ENCODE measurements at regions of chr22 and their contacts with region 1.

Region 1: GRCh38 chr22:46044621-46045438 is 67.9 kb upstream of the WNT7B start:
- DNase-seq: peak; percentile 41
- ATAC-seq: peak; percentile 65
- H3K4me3 Mint-ChIP-seq: peak overlapping the region; percentile 71
- H3K27ac Mint-ChIP-seq: peak overlapping the region; percentile 73
- H3K4me1 Mint-ChIP-seq: peaks cover 8% of the 10 kb centered on the region
- H3K27me3 Mint-ChIP-seq: no peaks in the 10 kb centered on the region
- CTCF ChIP-seq: no peak

Region 2: GRCh38 chr22:45968751-45969413 is 75.9 kb before region 1 on chr22:
- CTCF ChIA-PET with region 1: no interaction called
- POLR2A ChIA-PET with region 1: no interaction called
- intact Hi-C with region 1: no loop called
- DNase-seq: peak; percentile 27
- ATAC-seq: no peak
- H3K4me3 Mint-ChIP-seq: no peak overlapping the region
- H3K27ac Mint-ChIP-seq: no peak overlapping the region
- H3K4me1 Mint-ChIP-seq: no peaks in the 10 kb centered on the region
- H3K27me3 Mint-ChIP-seq: peaks cover 39% of the 10 kb centered on the region
- CTCF ChIP-seq: no peak

Region 3: GRCh38 chr22:46057762-46058420 is 13.1 kb after region 1 on chr22:
- CTCF ChIA-PET with region 1: interaction called, 3 read pairs
- POLR2A ChIA-PET with region 1: interaction called, 12 read pairs
- intact Hi-C with region 1: no loop called
- DNase-seq: peak; percentile 50
- ATAC-seq: peak; percentile 75
- H3K4me3 Mint-ChIP-seq: peak overlapping the region; percentile 32
- H3K27ac Mint-ChIP-seq: peak overlapping the region; percentile 81
- H3K4me1 Mint-ChIP-seq: peaks cover 38% of the 10 kb centered on the region
- H3K27me3 Mint-ChIP-seq: peaks cover 4% of the 10 kb centered on the region
- CTCF ChIP-seq: no peak

Region 4: GRCh38 chr22:46087336-46088277 is 42.8 kb after region 1 on chr22:
- CTCF ChIA-PET with region 1: no interaction called
- POLR2A ChIA-PET with region 1: no interaction called
- intact Hi-C with region 1: no loop called
- DNase-seq: no peak
- ATAC-seq: no peak
- H3K4me3 Mint-ChIP-seq: no peak overlapping the region
- H3K27ac Mint-ChIP-seq: no peak overlapping the region
- H3K4me1 Mint-ChIP-seq: no peaks in the 10 kb centered on the region
- H3K27me3 Mint-ChIP-seq: no peaks in the 10 kb centered on the region
- CTCF ChIP-seq: no peak

Region 5: DNA sequence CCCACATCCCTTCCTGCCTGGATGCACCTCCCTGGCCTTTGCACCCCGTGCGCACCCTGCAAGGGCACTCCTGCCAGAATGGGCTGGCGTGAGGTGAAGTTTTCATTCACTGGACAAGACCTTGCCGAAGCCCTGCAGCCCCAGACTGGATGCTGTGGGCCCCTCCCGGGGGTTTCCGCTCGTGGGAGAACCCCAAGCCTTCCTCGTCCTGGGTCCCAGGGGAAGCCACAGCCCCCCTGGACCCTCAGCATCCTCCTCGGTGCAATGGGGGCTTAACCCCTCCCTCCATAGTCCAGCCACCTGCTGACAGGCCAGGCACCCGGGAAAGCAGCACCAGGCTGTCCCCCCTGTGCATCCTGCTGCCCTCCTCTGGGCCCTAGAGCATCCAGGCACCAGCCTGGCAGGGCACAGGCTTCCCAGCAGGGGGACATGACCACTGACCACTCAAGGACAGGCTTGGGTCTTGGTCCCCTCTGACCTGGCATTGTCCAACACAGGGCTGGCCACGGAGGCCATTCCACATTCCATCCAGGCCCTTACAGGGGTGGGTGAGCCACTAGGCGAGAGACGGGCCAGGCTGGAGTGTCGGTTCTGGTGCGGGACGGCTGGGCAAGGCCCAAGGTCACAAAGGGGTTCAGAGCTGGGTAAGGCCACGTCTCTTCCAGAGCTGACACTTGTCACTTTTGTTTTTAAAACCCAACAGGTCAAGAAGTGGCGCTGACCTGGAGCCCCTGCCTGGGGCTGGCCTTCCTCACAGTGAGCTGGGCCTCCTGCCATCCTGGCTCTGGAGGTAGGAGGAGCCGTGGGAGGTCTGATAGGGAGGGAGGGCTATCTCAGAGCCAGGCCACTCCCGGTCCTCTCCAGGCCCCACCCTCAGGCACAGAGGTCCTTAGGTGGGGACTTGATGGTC is 64.0 kb after region 1 on chr22:
- CTCF ChIA-PET with region 1: no interaction called
- POLR2A ChIA-PET with region 1: no interaction called
- intact Hi-C with region 1: no loop called
- DNase-seq: no peak
- ATAC-seq: peak; percentile 40
- H3K4me3 Mint-ChIP-seq: no peak overlapping the region
- H3K27ac Mint-ChIP-seq: no peak overlapping the region
- H3K4me1 Mint-ChIP-seq: no peaks in the 10 kb centered on the region
- H3K27me3 Mint-ChIP-seq: no peaks in the 10 kb centered on the region
- CTCF ChIP-seq: no peak